CD8-positive, alpha-beta T cell (primary cell): ENCODE measurements at regions of chr1 and their contacts with region 1.

Region 1: DNA sequence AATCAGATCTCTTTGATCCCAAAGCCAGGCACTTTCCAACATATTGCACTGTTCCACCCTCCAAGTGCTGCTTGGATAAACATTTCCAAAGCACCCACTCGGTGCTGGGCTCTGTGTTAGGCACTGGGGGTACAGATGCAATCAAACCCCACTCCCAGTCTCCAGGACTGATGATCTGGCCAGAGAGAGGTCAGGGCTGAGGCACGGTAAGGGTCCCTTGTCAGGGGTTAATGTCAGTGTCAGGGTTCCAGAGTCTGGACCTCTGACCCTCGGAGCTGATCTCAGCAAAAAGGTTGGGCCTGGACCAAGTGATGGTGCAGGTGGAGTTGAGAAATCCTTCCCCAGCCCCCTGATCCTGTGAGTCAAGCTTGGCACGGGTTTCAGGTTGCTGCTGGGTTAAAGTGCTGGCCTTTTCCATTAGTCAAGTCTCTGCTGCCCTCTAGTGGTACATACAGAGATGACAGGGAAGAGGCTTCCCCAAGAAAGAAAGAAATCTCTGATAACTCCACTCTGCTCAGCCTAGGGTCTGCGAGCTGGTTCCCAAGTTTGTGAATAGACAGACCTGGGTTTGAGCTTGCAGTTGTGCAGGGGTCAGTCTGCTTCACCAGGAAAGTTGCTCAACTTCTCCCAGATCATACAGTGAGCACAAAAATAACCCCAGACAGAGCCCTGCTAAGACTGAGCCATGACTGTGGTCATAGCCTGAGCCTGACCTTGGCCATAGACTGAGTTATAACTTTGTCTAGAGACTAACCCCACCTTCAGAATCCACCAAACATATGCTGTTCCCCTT is 74.6 kb downstream of the DMRTA2 start:
- DNase-seq: peak in 5 of 9 experiments; percentile 10 to 61 (median 32)
- ATAC-seq: no peak
- H3K4me3 ChIP-seq: no peak overlapping the region
- H3K4me3 Mint-ChIP-seq: no peak overlapping the region
- H3K27ac ChIP-seq: no peak overlapping the region
- H3K27ac Mint-ChIP-seq: no peak overlapping the region
- H3K4me1 ChIP-seq: no peaks in the 10 kb centered on the region
- H3K4me1 Mint-ChIP-seq: no peaks in the 10 kb centered on the region
- H3K27me3 ChIP-seq: no peaks in the 10 kb centered on the region
- H3K27me3 Mint-ChIP-seq: peaks cover 23% of the 10 kb centered on the region
- CTCF ChIP-seq: peak; percentile 69

Region 2: GRCh38 chr1:50332941-50333594 is 15.6 kb before region 1 on chr1:
- CTCF ChIA-PET with region 1: interaction called, 11 read pairs
- POLR2A ChIA-PET with region 1: no interaction called
- intact Hi-C with region 1: no loop called
- DNase-seq: peak in 8 of 9 experiments; percentile 7 to 60 (median 31)
- ATAC-seq: peak; percentile 46
- H3K4me3 ChIP-seq: peak overlapping the region; percentile 47 to 54
- H3K4me3 Mint-ChIP-seq: peak overlapping the region; percentile 63
- H3K27ac ChIP-seq: no peak overlapping the region
- H3K27ac Mint-ChIP-seq: no peak overlapping the region
- H3K4me1 ChIP-seq: peaks cover 4% of the 10 kb centered on the region
- H3K4me1 Mint-ChIP-seq: peaks cover 8% of the 10 kb centered on the region
- H3K27me3 ChIP-seq: peaks cover 0 to 3% of the 10 kb centered on the region in 2 experiments
- H3K27me3 Mint-ChIP-seq: peaks cover 41% of the 10 kb centered on the region
- CTCF ChIP-seq: peak; percentile 49